Activated CD4-positive, alpha-beta T cell treated with anti-CD3 and anti-CD28 coated beads for 36 hours (primary cell): ENCODE measurements at regions of chr2 and their contacts with region 1.

Region 1: DNA sequence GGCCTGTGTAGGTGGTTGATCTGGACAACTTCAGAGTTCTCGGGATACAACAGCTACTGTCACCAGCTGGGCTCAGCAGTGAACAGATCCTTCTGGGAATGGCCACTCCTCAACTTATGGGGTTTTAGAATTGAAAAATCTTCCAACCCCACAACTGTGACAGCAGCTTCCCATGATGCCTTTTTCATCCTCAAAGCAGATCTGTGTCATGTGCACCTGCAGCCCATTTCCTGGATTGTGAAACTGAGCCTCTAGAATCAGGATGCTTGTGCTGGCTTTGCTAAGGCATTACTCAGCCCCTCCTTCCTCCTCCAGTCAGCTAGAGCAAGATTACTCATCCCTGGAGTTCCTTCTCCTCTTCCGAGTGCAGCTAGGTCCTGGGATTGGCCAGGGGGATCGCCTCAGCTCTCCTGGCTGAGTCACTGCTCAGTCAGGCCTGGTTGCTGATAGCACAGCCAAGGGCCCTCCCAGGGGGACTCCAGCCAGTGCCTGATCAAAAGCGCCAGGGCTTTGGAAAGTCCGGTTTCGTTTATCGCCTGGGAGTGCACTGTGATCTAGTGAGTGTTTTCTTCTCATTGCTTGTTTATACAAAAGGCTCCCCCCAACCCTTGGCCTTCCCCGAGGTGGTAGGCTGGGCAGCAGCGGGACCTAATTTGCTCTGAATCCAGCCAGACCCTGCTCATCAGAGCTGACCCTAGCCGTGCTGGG is 2.4 kb upstream of the LPIN1 start:
- DNase-seq: peak; percentile 90
- ATAC-seq: peak; percentile 83
- H3K4me3 Mint-ChIP-seq: peak overlapping the region; percentile 34
- H3K27ac Mint-ChIP-seq: peak overlapping the region; percentile 73
- H3K4me1 Mint-ChIP-seq: peaks cover 54% of the 10 kb centered on the region
- H3K27me3 Mint-ChIP-seq: no peaks in the 10 kb centered on the region

Region 2: DNA sequence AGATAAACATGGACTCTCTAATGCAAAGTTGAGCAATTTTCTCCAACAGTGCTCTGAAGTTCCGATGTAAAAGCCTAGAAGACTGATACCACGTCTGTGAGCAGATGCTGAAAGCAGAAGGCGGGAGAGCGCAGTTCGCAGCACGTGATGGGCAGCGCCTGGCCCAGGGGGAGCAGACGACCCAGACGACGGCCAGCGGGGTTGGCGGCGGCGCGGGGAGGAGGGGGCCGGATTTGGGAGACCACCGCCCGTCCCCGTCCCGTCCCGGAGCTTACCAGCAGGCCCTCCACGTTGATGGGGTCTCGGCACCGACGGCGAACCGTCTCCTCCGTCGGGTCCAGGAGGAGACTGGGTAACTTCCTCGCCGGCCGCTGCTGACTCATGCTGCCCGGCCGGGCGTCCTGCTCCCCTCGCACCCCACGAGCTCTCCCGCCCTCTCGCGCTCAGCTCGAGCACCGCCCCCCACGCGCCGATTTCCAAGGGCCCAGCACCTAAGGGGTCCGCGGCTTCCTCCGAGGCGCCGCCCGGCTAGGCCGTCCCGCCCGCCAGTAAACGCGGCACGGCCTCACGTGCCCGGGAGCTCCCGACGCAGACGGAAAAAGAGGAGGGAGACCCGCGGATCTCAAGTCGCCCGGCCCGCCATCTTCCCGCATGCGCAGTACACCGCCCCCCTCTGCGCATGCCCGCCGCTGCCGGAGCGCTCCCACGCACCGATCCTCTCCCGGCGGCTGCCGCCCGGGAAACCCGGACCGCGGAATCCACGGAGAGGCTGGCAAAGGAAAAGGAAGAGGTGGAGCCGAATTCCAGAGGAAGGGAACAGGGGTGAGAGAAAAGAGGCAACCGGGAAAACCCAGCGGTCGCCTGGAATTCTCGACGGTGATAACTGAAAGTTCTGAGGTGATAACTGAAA is 278.2 kb before region 1 on chr2 and contains the start of gene E2F6:
- CTCF ChIA-PET with region 1: no interaction called
- POLR2A ChIA-PET with region 1: no interaction called
- intact Hi-C with region 1: loop called in 1 of 2 experiments (anchors 5 kb)
- DNase-seq: peak; percentile 92
- ATAC-seq: peak; percentile 85
- H3K4me3 Mint-ChIP-seq: peak within 1 kb of the TSS; percentile 81
- H3K27ac Mint-ChIP-seq: peak within 1 kb of the TSS; percentile 92
- H3K4me1 Mint-ChIP-seq: peaks cover 33% of the 10 kb centered on the region
- H3K27me3 Mint-ChIP-seq: no peaks in the 10 kb centered on the region
- total RNA-seq, gene E2F6: 7.2 to 10.6 TPM

Region 3: GRCh38 chr2:11598228-11598731 is 145.7 kb before region 1 on chr2:
- CTCF ChIA-PET with region 1: no interaction called
- POLR2A ChIA-PET with region 1: no interaction called
- intact Hi-C with region 1: no loop called
- DNase-seq: no peak
- ATAC-seq: no peak
- H3K4me3 Mint-ChIP-seq: no peak overlapping the region
- H3K27ac Mint-ChIP-seq: no peak overlapping the region
- H3K4me1 Mint-ChIP-seq: no peaks in the 10 kb centered on the region
- H3K27me3 Mint-ChIP-seq: peaks cover 2% of the 10 kb centered on the region

Region 4: GRCh38 chr2:11688222-11689069 is 55.6 kb before region 1 on chr2:
- CTCF ChIA-PET with region 1: interaction called, 16 read pairs
- POLR2A ChIA-PET with region 1: no interaction called
- intact Hi-C with region 1: loop called (anchors 1 to 2 kb)
- DNase-seq: peak; percentile 92
- ATAC-seq: peak; percentile 95
- H3K4me3 Mint-ChIP-seq: no peak overlapping the region
- H3K27ac Mint-ChIP-seq: no peak overlapping the region
- H3K4me1 Mint-ChIP-seq: peaks cover 9% of the 10 kb centered on the region
- H3K27me3 Mint-ChIP-seq: peaks cover 5% of the 10 kb centered on the region

Region 5: GRCh38 chr2:11753886-11754699 is 10.1 kb after region 1 on chr2:
- CTCF ChIA-PET with region 1: interaction called, 31 read pairs
- POLR2A ChIA-PET with region 1: interaction called, 8 read pairs
- intact Hi-C with region 1: loop called in 1 of 2 experiments (anchors 1 kb)
- DNase-seq: peak; percentile 84
- ATAC-seq: peak; percentile 75
- H3K4me3 Mint-ChIP-seq: peak overlapping the region; percentile 75
- H3K27ac Mint-ChIP-seq: peak overlapping the region; percentile 98
- H3K4me1 Mint-ChIP-seq: peaks cover 91% of the 10 kb centered on the region
- H3K27me3 Mint-ChIP-seq: no peaks in the 10 kb centered on the region

Region 6: DNA sequence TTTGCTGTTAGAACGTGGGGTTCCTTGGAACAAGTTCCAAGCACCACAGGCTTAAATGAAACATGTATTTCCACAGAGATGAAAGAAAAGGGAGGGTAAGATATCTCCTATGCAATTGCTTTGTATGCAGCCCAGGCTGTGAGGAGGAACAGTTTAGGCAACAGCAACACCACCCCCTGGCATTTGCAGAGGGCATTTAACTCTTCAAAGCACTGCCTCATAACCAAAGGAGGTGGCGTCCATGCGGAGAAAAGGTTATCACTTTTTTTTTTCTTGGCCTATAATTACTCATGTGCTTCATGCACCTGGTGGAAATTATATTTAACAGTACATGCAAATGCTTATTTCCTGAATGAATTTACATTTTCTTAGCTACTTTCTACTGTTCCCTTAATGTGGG is 288.4 kb after region 1 on chr2:
- CTCF ChIA-PET with region 1: no interaction called
- POLR2A ChIA-PET with region 1: no interaction called
- intact Hi-C with region 1: no loop called
- DNase-seq: no peak
- ATAC-seq: no peak
- H3K4me3 Mint-ChIP-seq: no peak overlapping the region
- H3K27ac Mint-ChIP-seq: no peak overlapping the region
- H3K4me1 Mint-ChIP-seq: peaks cover 25% of the 10 kb centered on the region
- H3K27me3 Mint-ChIP-seq: peaks cover 3% of the 10 kb centered on the region